GM12878 (cell line): ENCODE measurements at regions of chr3 and their contacts with region 1.

Region 1: GRCh38 chr3:189270248-189270832 is 98.6 kb downstream of the TPRG1 start:
- DNase-seq: no peak
- ATAC-seq: peak; percentile 93
- H3K4me3 ChIP-seq: no peak overlapping the region
- H3K27ac ChIP-seq: no peak overlapping the region
- H3K4me1 ChIP-seq: no peaks in the 10 kb centered on the region; the same call in 1 of the 2 replicates
- H3K27me3 ChIP-seq: no peaks in the 10 kb centered on the region; a peak in 1 of 4 replicates
- CTCF ChIP-seq: peak; percentile 72 to 77 (median 75)
- EP300 ChIP-seq: no peak
- POLR2A ChIP-seq: no peak
- RAD21 ChIP-seq: peak; percentile 96

Region 2: GRCh38 chr3:189027626-189028155 is 242.6 kb before region 1 on chr3:
- CTCF ChIA-PET with region 1: no interaction called
- POLR2A ChIA-PET with region 1: no interaction called
- RAD21 ChIA-PET with region 1: no interaction called
- SMC1A ChIA-PET with region 1: no interaction called
- in situ Hi-C with region 1: no loop called
- intact Hi-C with region 1: no loop called
- DNase-seq: no peak
- ATAC-seq: no peak
- H3K4me3 ChIP-seq: no peak overlapping the region
- H3K27ac ChIP-seq: no peak overlapping the region
- H3K4me1 ChIP-seq: no peaks in the 10 kb centered on the region
- H3K27me3 ChIP-seq: no peaks in the 10 kb centered on the region
- CTCF ChIP-seq: no peak
- EP300 ChIP-seq: no peak
- POLR2A ChIP-seq: no peak
- RAD21 ChIP-seq: no peak

Region 3: DNA sequence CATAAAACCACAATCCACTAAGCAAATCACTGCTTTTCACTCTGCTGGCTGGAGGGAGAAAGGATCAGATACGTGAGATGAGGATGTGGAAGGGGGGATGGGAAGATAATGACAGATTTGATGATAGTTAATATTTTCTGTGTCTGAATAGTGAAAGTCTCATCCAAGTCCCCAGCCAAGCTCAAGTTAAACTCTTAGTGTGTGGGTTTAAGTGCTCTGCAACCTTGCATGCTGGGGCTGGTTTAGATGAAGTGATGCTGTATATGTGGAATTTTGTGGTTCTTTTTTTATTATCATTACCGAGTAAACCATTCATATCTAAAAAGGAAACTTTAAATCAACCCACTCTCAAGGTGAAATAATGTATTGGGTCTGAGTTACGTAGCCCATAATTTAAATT is 12.4 kb after region 1 on chr3:
- CTCF ChIA-PET with region 1: interaction called, 21 read pairs
- POLR2A ChIA-PET with region 1: no interaction called
- RAD21 ChIA-PET with region 1: interaction called, 4 read pairs
- SMC1A ChIA-PET with region 1: interaction called, 17 read pairs
- in situ Hi-C with region 1: no loop called
- intact Hi-C with region 1: no loop called
- DNase-seq: no peak
- ATAC-seq: no peak
- H3K4me3 ChIP-seq: no peak overlapping the region
- H3K27ac ChIP-seq: no peak overlapping the region
- H3K4me1 ChIP-seq: peaks cover 22% of the 10 kb centered on the region
- H3K27me3 ChIP-seq: no peaks in the 10 kb centered on the region
- CTCF ChIP-seq: no peak
- EP300 ChIP-seq: no peak
- POLR2A ChIP-seq: no peak
- RAD21 ChIP-seq: no peak

Region 4: DNA sequence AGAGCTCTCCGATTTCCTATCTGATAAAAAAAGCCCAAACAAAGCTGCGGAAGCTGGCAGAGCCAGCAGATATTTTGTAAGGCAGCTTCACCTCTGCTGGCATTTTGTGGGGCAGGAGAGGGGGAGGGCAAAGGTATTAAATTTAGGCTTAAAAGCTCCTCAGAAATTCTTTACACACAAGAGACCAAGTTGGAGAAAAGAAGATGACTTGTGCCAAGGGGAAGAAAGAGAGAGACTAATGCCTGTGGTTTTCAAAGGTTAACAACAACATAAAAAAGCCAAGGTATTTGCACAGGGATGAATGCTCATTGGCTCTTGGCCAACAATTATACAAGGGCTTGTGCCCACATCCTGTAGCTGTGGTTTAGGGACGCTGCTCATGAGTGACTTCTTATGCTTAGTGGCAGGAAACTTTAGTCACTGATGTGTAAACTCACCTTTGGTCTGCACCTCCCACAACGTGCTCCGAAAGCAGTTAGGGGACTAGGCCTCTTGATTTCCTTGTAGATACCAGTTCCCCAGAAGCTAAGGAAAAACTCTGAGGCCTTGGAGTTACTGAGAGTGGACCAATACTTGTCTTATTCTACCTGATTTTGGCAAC is 54.3 kb after region 1 on chr3:
- CTCF ChIA-PET with region 1: interaction called, 11 read pairs
- POLR2A ChIA-PET with region 1: no interaction called
- RAD21 ChIA-PET with region 1: no interaction called
- SMC1A ChIA-PET with region 1: interaction called, 6 read pairs
- in situ Hi-C with region 1: no loop called
- intact Hi-C with region 1: no loop called
- DNase-seq: peak; percentile 94
- ATAC-seq: peak; percentile 100
- H3K4me3 ChIP-seq: no peak overlapping the region
- H3K27ac ChIP-seq: peak overlapping the region; percentile 44; the same call in 1 of the 2 replicates
- H3K4me1 ChIP-seq: peaks cover 15% of the 10 kb centered on the region
- H3K27me3 ChIP-seq: no peaks in the 10 kb centered on the region
- CTCF ChIP-seq: no peak
- EP300 ChIP-seq: peak in 1 of 2 experiments; percentile 69; a peak in 1 of 4 replicates
- POLR2A ChIP-seq: no peak
- RAD21 ChIP-seq: 0 out of 2 replicates have a peak, but pooled peaks have one; percentile 14

Region 5: DNA sequence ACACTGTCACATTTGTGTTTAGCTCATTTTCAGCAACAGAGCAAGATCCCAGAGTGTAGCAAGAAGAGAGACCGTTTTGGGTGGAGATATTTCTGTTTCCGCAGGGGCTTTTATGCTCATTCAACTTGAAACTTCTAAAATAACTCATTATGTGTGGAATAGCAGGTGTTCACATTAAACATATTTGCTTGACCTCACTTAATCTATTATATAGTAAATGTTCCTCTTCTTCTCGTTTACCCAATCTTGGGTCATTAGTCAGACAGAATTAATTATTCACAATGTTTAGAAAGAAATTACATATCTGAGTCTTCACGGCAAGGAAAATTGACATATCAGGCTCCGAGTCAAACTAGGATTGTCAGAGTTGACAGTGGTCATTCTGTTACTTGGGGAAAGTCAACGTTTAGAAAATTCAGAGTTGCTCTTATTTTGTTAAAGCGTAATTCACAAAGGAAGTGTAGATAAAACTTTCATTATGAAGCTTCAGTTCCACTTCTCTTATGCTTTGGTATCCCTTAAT is 124.3 kb after region 1 on chr3:
- CTCF ChIA-PET with region 1: interaction called, 7 read pairs
- POLR2A ChIA-PET with region 1: no interaction called
- RAD21 ChIA-PET with region 1: interaction called, 4 read pairs
- SMC1A ChIA-PET with region 1: interaction called, 11 read pairs
- in situ Hi-C with region 1: no loop called
- intact Hi-C with region 1: no loop called
- DNase-seq: peak; percentile 64
- ATAC-seq: peak; percentile 90
- H3K4me3 ChIP-seq: peak overlapping the region; percentile 6; the same call in 1 of the 2 replicates
- H3K27ac ChIP-seq: peak overlapping the region; percentile 86
- H3K4me1 ChIP-seq: peaks cover 28% of the 10 kb centered on the region
- H3K27me3 ChIP-seq: no peaks in the 10 kb centered on the region
- CTCF ChIP-seq: no peak
- EP300 ChIP-seq: peak; percentile 37 to 59; a peak in 3 of 4 replicates
- POLR2A ChIP-seq: no peak
- RAD21 ChIP-seq: 0 out of 2 replicates have a peak, but pooled peaks have one; percentile 20

Region 6: DNA sequence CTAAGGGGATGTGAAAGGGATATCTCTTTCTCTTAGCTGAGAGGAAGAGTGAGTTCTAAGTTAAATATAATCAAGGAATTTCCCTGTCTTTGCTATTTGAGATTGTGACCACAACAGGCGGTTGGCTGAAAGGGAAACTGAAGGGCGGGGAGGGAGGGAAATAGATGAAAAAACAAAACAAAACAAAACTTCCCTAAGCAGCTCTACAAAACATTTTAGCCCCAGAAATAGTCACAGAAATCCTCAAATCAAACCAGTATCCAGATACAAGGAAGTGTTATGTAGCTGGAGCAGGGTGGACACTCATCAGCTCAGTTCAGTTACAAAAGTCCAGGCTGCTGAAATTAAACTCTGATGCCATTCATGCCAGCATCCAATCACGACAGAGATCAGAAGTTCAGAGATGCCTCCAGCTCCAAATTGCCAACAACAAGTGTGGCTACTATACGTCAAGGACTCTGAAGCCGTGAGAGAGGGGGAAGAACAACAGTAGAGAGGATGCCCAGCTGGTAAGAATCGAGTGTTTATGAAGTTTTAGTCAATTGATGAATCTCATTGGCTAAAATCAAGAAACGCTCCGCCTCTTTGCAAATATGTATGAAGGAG is 360.5 kb after region 1 on chr3:
- CTCF ChIA-PET with region 1: interaction called, 5 read pairs
- POLR2A ChIA-PET with region 1: no interaction called
- RAD21 ChIA-PET with region 1: interaction called, 5 read pairs
- SMC1A ChIA-PET with region 1: interaction called, 4 read pairs
- in situ Hi-C with region 1: no loop called
- intact Hi-C with region 1: loop called (anchors 5 kb)
- DNase-seq: peak; percentile 73
- ATAC-seq: peak; percentile 81
- H3K4me3 ChIP-seq: peak overlapping the region; percentile 65
- H3K27ac ChIP-seq: peak overlapping the region; percentile 86
- H3K4me1 ChIP-seq: peaks cover 13% of the 10 kb centered on the region; the same call in 1 of the 2 replicates
- H3K27me3 ChIP-seq: no peaks in the 10 kb centered on the region
- CTCF ChIP-seq: no peak
- EP300 ChIP-seq: peak in 1 of 2 experiments; percentile 41; a peak in 1 of 4 replicates
- POLR2A ChIP-seq: no peak
- RAD21 ChIP-seq: 0 out of 2 replicates have a peak, but pooled peaks have one; percentile 6

Region 7: DNA sequence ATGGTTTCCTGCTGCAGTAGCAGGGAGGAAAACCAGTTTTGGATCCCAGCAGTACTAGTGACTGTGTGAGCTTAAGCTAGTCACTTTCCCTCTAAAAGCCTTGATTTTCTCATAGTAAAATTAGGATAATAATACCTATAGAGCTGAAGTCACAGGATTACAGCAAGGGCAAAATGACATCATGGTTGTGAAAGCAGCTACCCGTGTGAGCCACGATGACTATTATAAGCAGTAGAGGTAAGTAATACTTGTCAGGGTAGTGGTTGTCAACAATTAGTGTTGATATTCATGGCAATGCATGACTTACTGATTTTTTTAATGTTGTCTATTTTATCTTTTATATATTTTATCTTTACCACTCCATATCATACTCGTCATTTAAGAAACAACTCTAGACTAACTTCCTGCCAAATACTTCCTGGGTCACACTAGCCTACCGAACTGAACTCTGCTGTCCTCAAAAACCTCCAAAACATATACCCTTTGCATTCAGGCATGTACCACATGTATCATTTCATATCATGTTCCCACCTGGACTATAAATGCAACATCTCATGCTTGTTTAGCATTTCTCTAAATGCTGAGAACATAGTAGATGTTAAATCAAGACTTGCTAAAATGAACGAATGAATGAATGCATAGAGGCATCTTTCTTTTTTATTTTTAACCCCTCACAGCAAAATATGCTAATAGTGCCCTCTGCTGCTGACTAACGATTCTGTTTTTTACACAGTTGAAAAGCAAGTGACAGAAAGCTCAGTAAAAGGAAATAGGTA is 677.8 kb after region 1 on chr3:
- CTCF ChIA-PET with region 1: interaction called, 288 read pairs
- POLR2A ChIA-PET with region 1: no interaction called
- RAD21 ChIA-PET with region 1: interaction called, 195 read pairs
- SMC1A ChIA-PET with region 1: interaction called, 213 read pairs
- in situ Hi-C with region 1: no loop called
- intact Hi-C with region 1: loop called (anchors 1 kb)
- DNase-seq: peak; percentile 32
- ATAC-seq: peak; percentile 76
- H3K4me3 ChIP-seq: no peak overlapping the region
- H3K27ac ChIP-seq: no peak overlapping the region
- H3K4me1 ChIP-seq: peaks cover 3% of the 10 kb centered on the region; the same call in 1 of the 2 replicates
- H3K27me3 ChIP-seq: no peaks in the 10 kb centered on the region; a peak in 1 of 4 replicates
- CTCF ChIP-seq: peak; percentile 55 to 69 (median 60); a peak in 5 of 6 replicates
- EP300 ChIP-seq: no peak
- POLR2A ChIP-seq: no peak
- RAD21 ChIP-seq: peak; percentile 92